ENCODE measurements at regions of chr5 and their contacts with region 1.

Region 1: GRCh38 chr5:42057254-42057690 is 132.2 kb downstream of the FBXO4 start:
- DNase-seq: peak; percentile 20
- ATAC-seq: peak; percentile 96
- H3K4me3 ChIP-seq: no peak overlapping the region
- H3K27ac ChIP-seq: no peak overlapping the region
- H3K4me1 ChIP-seq: no peaks in the 10 kb centered on the region
- H3K27me3 ChIP-seq: no peaks in the 10 kb centered on the region
- CTCF ChIP-seq: peak; percentile 81 to 89 (median 82)
- EP300 ChIP-seq: no peak
- POLR2A ChIP-seq: no peak
- RAD21 ChIP-seq: peak; percentile 82

Region 2: GRCh38 chr5:41707853-41708603 is 349.2 kb before region 1 on chr5:
- CTCF ChIA-PET with region 1: interaction called, 16 read pairs
- POLR2A ChIA-PET with region 1: no interaction called
- RAD21 ChIA-PET with region 1: interaction called, 4 read pairs
- SMC1A ChIA-PET with region 1: interaction called, 4 read pairs
- in situ Hi-C with region 1: no loop called
- intact Hi-C with region 1: no loop called
- DNase-seq: no peak
- ATAC-seq: peak; percentile 91
- H3K4me3 ChIP-seq: no peak overlapping the region
- H3K27ac ChIP-seq: no peak overlapping the region
- H3K4me1 ChIP-seq: no peaks in the 10 kb centered on the region
- H3K27me3 ChIP-seq: no peaks in the 10 kb centered on the region
- CTCF ChIP-seq: peak; percentile 47 to 68 (median 53); a peak in 5 of 6 replicates
- EP300 ChIP-seq: no peak
- POLR2A ChIP-seq: no peak
- RAD21 ChIP-seq: peak; percentile 83

Region 3: GRCh38 chr5:41856644-41857491 is 200.4 kb before region 1 on chr5:
- CTCF ChIA-PET with region 1: interaction called, 300 read pairs
- POLR2A ChIA-PET with region 1: interaction called, 4 read pairs
- RAD21 ChIA-PET with region 1: interaction called, 127 read pairs
- SMC1A ChIA-PET with region 1: interaction called, 172 read pairs
- in situ Hi-C with region 1: loop called (anchors 5 kb)
- intact Hi-C with region 1: loop called (anchors 1 kb)
- DNase-seq: no peak
- ATAC-seq: peak; percentile 98
- H3K4me3 ChIP-seq: no peak overlapping the region
- H3K27ac ChIP-seq: no peak overlapping the region
- H3K4me1 ChIP-seq: no peaks in the 10 kb centered on the region
- H3K27me3 ChIP-seq: no peaks in the 10 kb centered on the region
- CTCF ChIP-seq: peak; percentile 57 to 83 (median 75)
- EP300 ChIP-seq: no peak
- POLR2A ChIP-seq: no peak
- RAD21 ChIP-seq: peak; percentile 90

Region 4: DNA sequence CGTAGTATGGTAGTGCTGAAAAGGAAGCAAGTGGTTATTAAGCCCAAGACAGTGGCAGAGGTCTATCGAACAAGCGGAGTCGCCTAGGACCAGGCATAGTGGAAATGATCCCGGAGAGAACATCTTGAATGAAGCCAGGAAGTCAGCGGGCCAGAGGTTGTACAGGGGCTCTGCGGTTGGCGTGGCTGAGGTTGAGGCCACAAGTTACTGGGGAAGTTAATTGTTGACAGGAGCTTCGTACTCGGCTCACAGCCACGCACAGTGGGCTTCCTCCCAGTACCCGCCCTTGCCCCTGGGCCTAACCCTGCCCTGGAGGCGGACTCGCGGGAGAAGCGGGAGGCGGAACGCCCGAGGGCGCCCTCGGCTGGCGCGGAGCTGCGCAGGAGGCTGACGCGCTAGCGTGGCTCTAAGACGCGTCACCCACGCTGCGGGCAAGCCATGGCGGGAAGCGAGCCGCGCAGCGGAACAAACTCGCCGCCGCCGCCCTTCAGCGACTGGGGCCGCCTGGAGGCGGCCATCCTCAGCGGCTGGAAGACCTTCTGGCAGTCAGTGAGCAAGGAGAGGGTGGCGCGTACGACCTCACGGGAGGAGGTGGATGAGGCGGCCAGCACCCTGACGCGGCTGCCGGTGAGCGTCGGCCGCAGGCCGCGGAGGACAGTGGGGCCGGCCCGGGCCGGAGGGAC is 132.3 kb before region 1 on chr5 and contains the start of gene FBXO4:
- CTCF ChIA-PET with region 1: interaction called, 6 read pairs
- POLR2A ChIA-PET with region 1: no interaction called
- RAD21 ChIA-PET with region 1: interaction called, 4 read pairs
- SMC1A ChIA-PET with region 1: interaction called, 4 read pairs
- in situ Hi-C with region 1: no loop called
- intact Hi-C with region 1: loop called (anchors 5 kb)
- DNase-seq: peak; percentile 63
- ATAC-seq: peak; percentile 96
- H3K4me3 ChIP-seq: peak within 1 kb of the TSS; percentile 84
- H3K27ac ChIP-seq: peak within 1 kb of the TSS; percentile 97
- H3K4me1 ChIP-seq: peaks cover 21% of the 10 kb centered on the region
- H3K27me3 ChIP-seq: no peaks in the 10 kb centered on the region
- CTCF ChIP-seq: peak; percentile 58 to 82 (median 74)
- EP300 ChIP-seq: no peak; a peak in 1 of 4 replicates
- POLR2A ChIP-seq: peak; percentile 96
- RAD21 ChIP-seq: peak; percentile 47; the same call in 1 of the 2 replicates
- polyA plus RNA-seq, gene FBXO4: 7.2 to 13.8 TPM

Region 5: DNA sequence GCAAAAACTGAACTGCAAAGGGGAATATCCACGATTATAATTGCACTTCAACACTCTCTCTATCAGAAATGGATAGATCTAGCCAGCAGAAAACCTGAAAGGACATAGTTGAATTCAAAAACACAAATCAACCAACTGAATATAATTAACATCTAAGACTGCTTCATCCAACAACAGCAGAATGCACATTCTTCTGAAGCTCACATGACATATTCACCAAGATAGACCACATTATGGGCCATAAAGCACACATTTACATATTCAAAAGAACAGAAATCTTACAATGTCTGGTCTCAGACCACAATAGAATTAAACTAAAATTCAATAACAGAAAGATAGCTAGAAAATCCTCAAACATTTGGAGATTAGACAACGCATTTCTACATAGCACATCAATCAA is 13.9 kb before region 1 on chr5:
- CTCF ChIA-PET with region 1: interaction called, 24 read pairs
- POLR2A ChIA-PET with region 1: no interaction called
- RAD21 ChIA-PET with region 1: interaction called, 4 read pairs
- SMC1A ChIA-PET with region 1: interaction called, 10 read pairs
- in situ Hi-C with region 1: no loop called
- intact Hi-C with region 1: no loop called
- DNase-seq: no peak
- ATAC-seq: no peak
- H3K4me3 ChIP-seq: no peak overlapping the region
- H3K27ac ChIP-seq: no peak overlapping the region
- H3K4me1 ChIP-seq: no peaks in the 10 kb centered on the region
- H3K27me3 ChIP-seq: no peaks in the 10 kb centered on the region
- CTCF ChIP-seq: no peak
- EP300 ChIP-seq: no peak
- POLR2A ChIP-seq: no peak
- RAD21 ChIP-seq: no peak

Region 6: DNA sequence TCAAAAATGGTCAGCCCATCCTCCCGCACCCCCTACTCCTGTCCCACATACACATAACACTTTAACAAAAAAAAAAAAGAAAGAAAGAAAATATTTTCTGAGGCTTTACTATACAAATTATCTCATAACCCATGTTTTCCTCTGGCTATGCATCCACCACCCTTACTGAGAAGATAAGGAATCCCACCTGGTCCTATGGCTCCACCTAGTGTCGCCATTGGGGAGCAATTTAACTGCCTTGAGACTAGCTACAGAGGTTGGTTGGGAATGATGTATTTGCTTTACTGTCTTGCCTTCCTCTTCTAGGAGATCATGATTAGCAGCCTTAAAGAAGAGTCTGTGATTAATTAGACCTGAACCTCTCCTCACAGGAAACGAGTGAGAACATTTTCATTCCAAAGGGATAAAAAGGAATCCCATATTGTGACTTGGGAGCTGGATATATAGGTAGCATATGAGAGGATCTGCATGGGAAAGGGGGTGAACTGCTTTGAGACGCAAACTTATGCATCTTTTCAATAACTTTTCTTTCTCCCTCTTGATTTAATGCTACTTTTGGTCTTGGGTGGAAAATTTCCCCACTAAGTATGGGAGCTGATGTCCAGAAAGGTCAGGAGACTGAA is 832.1 kb after region 1 on chr5:
- CTCF ChIA-PET with region 1: interaction called, 8 read pairs
- POLR2A ChIA-PET with region 1: no interaction called
- RAD21 ChIA-PET with region 1: interaction called, 17 read pairs
- SMC1A ChIA-PET with region 1: interaction called, 9 read pairs
- in situ Hi-C with region 1: no loop called
- intact Hi-C with region 1: no loop called
- DNase-seq: no peak
- ATAC-seq: peak; percentile 97; the same call in 2 of the 3 replicates
- H3K4me3 ChIP-seq: no peak overlapping the region
- H3K27ac ChIP-seq: no peak overlapping the region
- H3K4me1 ChIP-seq: no peaks in the 10 kb centered on the region
- H3K27me3 ChIP-seq: peaks cover 0 to 2% of the 10 kb centered on the region in 2 experiments; a peak in 2 of 4 replicates
- CTCF ChIP-seq: peak; percentile 85 to 92 (median 90)
- EP300 ChIP-seq: no peak
- POLR2A ChIP-seq: no peak
- RAD21 ChIP-seq: peak; percentile 96

Measured in GM12878 (cell line).